ENCODE measurements at regions of chr7 and their contacts with region 1.

Region 1: DNA sequence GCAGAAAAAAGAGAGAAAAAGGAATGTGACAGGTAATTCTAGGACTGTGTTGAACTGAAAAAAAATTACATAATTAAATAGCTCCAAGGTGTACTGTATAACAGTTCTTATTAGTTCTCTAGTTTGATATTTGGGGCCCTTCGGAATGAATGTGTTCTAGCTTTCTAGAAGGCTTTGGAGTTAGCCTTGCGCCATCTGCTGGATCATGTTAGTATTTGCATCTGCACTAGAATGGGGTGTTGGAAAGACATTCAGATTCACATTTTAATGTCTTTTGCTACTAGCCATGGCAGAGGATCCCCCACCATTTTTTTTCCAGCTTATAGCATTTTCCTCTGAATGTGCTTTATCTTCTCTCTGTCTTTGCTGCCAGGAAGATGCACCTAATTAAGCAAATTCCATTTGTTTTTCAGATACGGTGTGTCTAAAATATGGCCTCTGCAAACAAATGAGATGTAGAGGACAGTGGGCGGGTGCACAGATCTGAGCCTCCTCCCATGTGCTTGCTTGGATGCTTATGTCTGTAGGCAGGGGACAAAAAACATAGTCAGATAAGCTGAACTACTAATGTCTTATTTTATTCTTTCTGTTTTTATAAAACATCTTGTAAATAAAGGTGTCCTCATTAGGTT is 238.5 kb downstream of the PHF14 start:
- DNase-seq: peak; percentile 53
- H3K4me3 ChIP-seq: no peak overlapping the region
- H3K27ac ChIP-seq: peak overlapping the region in 2 of 4 donors; percentile 13 to 33
- H3K4me1 ChIP-seq: peaks cover 0 to 4% (median 0%) of the 10 kb centered on the region in 4 donors
- H3K27me3 ChIP-seq: no peaks in the 10 kb centered on the region
- CTCF ChIP-seq: peak; percentile 67 to 80 (median 74)
- EP300 ChIP-seq: no peak
- POLR2A ChIP-seq: no peak

Region 2: DNA sequence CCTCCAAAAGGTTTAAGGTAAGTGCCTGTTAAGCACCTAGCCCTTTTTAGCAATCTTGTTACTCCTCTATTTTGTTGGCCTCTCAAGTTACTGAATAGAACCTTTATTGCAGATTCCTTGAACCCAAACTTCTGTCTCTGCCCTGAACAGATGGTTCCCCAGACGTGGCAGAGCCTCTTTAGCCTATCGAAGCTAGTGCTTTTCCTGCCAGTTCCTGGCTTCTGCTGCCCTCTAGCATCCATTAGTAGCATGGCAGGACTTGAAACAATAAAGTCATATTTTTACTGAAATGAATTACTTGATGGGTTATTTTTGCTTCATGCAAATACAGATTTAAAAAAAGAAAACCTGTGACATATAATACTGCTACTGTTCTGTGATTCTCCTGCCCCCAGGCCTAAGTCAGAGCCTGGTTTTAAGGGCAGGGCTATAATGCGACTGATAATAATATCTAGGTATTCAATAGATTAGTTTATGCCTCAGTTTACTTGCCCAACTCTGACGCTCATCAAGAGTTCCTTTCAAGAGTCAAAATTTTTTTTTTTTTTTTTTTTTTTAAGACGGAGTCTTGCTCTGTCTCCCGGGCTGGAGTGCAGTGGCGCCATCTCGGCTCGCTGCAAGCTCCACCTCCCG is 322.8 kb before region 1 on chr7:
- in situ Hi-C with region 1: loop called in 1 of 4 experiments (anchors 25 kb)
- intact Hi-C with region 1: no loop called
- DNase-seq: peak; percentile 20
- H3K4me3 ChIP-seq: no peak overlapping the region
- H3K27ac ChIP-seq: no peak overlapping the region
- H3K4me1 ChIP-seq: peaks cover 0 to 7% (median 0%) of the 10 kb centered on the region in 4 donors
- H3K27me3 ChIP-seq: no peaks in the 10 kb centered on the region
- CTCF ChIP-seq: peak; percentile 32 to 61 (median 47)
- EP300 ChIP-seq: no peak
- POLR2A ChIP-seq: no peak

Region 3: GRCh38 chr7:11170175-11170574 is 42.0 kb before region 1 on chr7:
- in situ Hi-C with region 1: no loop called
- intact Hi-C with region 1: loop called (anchors 2 kb)
- DNase-seq: no peak
- H3K4me3 ChIP-seq: no peak overlapping the region
- H3K27ac ChIP-seq: no peak overlapping the region
- H3K4me1 ChIP-seq: no peaks in the 10 kb centered on the region
- H3K27me3 ChIP-seq: no peaks in the 10 kb centered on the region
- CTCF ChIP-seq: no peak
- EP300 ChIP-seq: no peak
- POLR2A ChIP-seq: no peak

Region 4: GRCh38 chr7:11252705-11253289 is 40.6 kb after region 1 on chr7:
- in situ Hi-C with region 1: no loop called
- intact Hi-C with region 1: no loop called
- DNase-seq: no peak
- H3K4me3 ChIP-seq: no peak overlapping the region
- H3K27ac ChIP-seq: no peak overlapping the region
- H3K4me1 ChIP-seq: peaks cover 0 to 8% (median 0%) of the 10 kb centered on the region in 4 donors
- H3K27me3 ChIP-seq: no peaks in the 10 kb centered on the region
- CTCF ChIP-seq: no peak
- EP300 ChIP-seq: no peak
- POLR2A ChIP-seq: no peak

Region 5: DNA sequence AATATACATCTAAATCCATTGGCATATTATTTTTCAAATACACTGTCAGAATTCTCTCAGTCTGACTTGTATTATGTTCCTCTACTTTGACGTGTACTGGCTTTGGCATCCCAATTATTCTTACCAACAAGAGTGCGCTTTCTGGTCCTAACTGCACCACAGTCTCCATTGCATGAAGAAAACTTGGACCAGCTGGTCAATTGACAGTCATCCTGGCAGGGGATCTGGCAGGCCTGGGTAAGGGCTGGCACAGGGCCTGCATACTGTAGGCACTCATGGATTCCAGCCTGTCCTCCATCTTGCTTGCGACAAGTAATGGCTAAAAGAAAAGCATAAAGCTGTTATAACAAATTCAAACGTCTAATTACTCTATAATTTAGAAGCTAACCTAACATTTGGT is 234.9 kb after region 1 on chr7:
- in situ Hi-C with region 1: no loop called
- intact Hi-C with region 1: no loop called
- DNase-seq: no peak
- H3K4me3 ChIP-seq: no peak overlapping the region
- H3K27ac ChIP-seq: no peak overlapping the region
- H3K4me1 ChIP-seq: peaks cover 0 to 8% (median 4%) of the 10 kb centered on the region in 4 donors
- H3K27me3 ChIP-seq: no peaks in the 10 kb centered on the region
- CTCF ChIP-seq: no peak
- EP300 ChIP-seq: no peak
- POLR2A ChIP-seq: no peak

Region 6: DNA sequence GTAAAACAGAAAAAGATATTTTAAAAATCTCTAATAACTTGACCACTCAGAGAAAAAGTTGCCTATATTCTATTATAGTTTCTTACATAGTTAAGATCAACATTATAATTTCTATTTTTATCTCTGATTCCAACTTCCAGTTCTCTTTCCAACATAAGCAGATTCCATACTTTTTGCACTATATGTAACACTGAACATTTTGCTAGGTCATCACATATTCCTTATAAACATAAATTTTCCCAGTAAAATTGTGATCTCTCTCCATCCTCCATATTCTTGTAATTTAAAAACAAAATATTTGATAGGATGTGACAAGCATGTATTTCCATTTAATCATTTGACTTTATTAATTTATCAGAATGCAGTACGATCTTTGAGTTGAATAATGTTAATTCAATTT is 790.2 kb after region 1 on chr7:
- in situ Hi-C with region 1: no loop called
- intact Hi-C with region 1: no loop called
- DNase-seq: no peak
- H3K4me3 ChIP-seq: no peak overlapping the region
- H3K27ac ChIP-seq: no peak overlapping the region
- H3K4me1 ChIP-seq: peaks cover 0 to 7% (median 0%) of the 10 kb centered on the region in 4 donors
- H3K27me3 ChIP-seq: no peaks in the 10 kb centered on the region
- CTCF ChIP-seq: no peak
- EP300 ChIP-seq: no peak
- POLR2A ChIP-seq: no peak

Measured in transverse colon (tissue), 4 donors.